CD14-positive monocyte (primary cell): ENCODE measurements at regions of chr2 and their contacts with region 1.

Region 1: GRCh38 chr2:20642055-20642971 is 8.6 kb downstream of the HS1BP3 start:
- DNase-seq: peak; percentile 53 to 65 (median 57)
- H3K4me3 ChIP-seq: no peak overlapping the region
- H3K4me3 Mint-ChIP-seq: no peak overlapping the region
- H3K27ac ChIP-seq: peak overlapping the region in 1 of 2 donors; percentile 27
- H3K27ac Mint-ChIP-seq: peak overlapping the region in 4 of 7 donors; percentile 61 to 81 (median 76)
- H3K4me1 ChIP-seq: no peaks in the 10 kb centered on the region
- H3K4me1 Mint-ChIP-seq: peaks cover 15% of the 10 kb centered on the region
- H3K27me3 ChIP-seq: no peaks in the 10 kb centered on the region
- H3K27me3 Mint-ChIP-seq: peaks cover 0 to 5% (median 0%) of the 10 kb centered on the region in 3 donors
- CTCF ChIP-seq: peak; percentile 89

Region 2: DNA sequence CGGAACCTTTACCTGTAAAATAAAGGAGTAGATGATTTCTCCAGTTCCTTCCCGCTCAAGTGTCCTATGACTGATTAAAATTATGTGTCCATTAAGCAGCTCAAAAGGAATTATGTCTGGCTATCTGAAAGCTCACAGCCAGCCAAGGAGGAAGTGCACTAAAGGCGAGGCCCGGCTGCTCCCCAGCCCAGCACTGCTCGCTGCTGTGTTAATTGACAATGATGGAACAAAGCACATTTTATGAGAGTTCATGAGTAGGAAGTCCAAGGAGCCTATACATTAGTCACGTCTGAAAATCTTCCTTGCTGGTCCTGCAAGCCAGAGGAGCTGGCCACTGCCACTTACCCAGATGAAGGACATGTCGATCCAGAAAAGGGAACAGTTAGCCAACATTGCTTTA is 754.8 kb before region 1 on chr2:
- intact Hi-C with region 1: loop called in 1 of 2 experiments (anchors 10 kb)
- DNase-seq: peak; percentile 21 to 35 (median 34)
- H3K4me3 ChIP-seq: no peak overlapping the region
- H3K4me3 Mint-ChIP-seq: peak overlapping the region in 1 of 2 donors; percentile 19
- H3K27ac ChIP-seq: peak overlapping the region in 1 of 2 donors; percentile 1
- H3K27ac Mint-ChIP-seq: peak overlapping the region in 5 of 7 donors; percentile 24 to 81 (median 69)
- H3K4me1 ChIP-seq: peaks cover 28 to 37% of the 10 kb centered on the region in 2 donors
- H3K4me1 Mint-ChIP-seq: peaks cover 36% of the 10 kb centered on the region
- H3K27me3 ChIP-seq: no peaks in the 10 kb centered on the region
- H3K27me3 Mint-ChIP-seq: peaks cover 0 to 7% (median 4%) of the 10 kb centered on the region in 3 donors
- CTCF ChIP-seq: no peak

Region 3: DNA sequence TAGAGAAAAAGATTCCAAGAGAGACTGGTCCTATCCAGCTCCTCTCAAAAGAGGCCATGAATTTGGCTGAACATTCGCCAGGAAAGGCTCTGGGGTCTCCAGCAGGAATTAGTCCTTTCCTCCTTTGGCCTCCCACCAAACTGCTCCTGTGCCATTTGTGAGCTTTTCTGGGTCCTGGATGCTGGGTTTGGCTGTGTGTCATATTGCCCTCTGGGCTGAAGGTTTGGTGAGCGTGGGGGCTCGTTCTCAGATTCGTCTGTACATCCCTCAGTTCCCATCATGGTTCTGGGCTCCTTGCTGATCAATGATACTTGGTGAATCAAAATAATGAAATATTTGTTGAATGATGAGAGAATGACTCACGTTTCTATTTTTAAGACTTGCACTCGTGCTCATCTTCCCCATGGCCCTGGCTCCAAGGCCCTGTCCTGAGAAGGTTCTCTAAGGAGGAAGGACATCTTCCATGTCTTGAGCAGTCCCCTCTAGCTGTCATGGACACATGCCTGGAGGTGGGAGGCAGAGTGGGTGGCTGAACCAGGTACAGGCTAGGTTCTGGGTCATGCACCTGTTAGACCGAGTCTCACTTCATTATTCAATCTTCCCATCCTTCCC is 243.3 kb before region 1 on chr2:
- intact Hi-C with region 1: loop called (anchors 5 kb)
- DNase-seq: no peak
- H3K4me3 ChIP-seq: no peak overlapping the region
- H3K4me3 Mint-ChIP-seq: no peak overlapping the region
- H3K27ac ChIP-seq: no peak overlapping the region
- H3K27ac Mint-ChIP-seq: no peak overlapping the region
- H3K4me1 ChIP-seq: no peaks in the 10 kb centered on the region
- H3K4me1 Mint-ChIP-seq: no peaks in the 10 kb centered on the region
- H3K27me3 ChIP-seq: no peaks in the 10 kb centered on the region
- H3K27me3 Mint-ChIP-seq: peaks cover 2 to 6% (median 4%) of the 10 kb centered on the region in 3 donors
- CTCF ChIP-seq: no peak

Region 4: GRCh38 chr2:20446917-20447436 is 195.3 kb before region 1 on chr2 and contains the start of gene RHOB:
- intact Hi-C with region 1: loop called in 1 of 2 experiments (anchors 5 kb)
- DNase-seq: peak; percentile 98 to 100 (median 98)
- H3K4me3 ChIP-seq: peak within 1 kb of the TSS; percentile 75 to 93 (median 91)
- H3K4me3 Mint-ChIP-seq: peak within 1 kb of the TSS; percentile 95 to 96
- H3K27ac ChIP-seq: peak within 1 kb of the TSS; percentile 63 to 81
- H3K27ac Mint-ChIP-seq: peak within 1 kb of the TSS; percentile 84 to 98 (median 95)
- H3K4me1 ChIP-seq: peaks cover 18 to 34% of the 10 kb centered on the region in 2 donors
- H3K4me1 Mint-ChIP-seq: peaks cover 33% of the 10 kb centered on the region
- H3K27me3 ChIP-seq: peaks cover 0 to 9% of the 10 kb centered on the region in 2 donors
- H3K27me3 Mint-ChIP-seq: peaks cover 15 to 36% (median 36%) of the 10 kb centered on the region in 3 donors
- CTCF ChIP-seq: no peak
- polyA plus RNA-seq, gene RHOB: 43.3 to 602 (median 66.3) TPM

Region 5: GRCh38 chr2:20474757-20475566 is 167.4 kb before region 1 on chr2:
- intact Hi-C with region 1: no loop called
- DNase-seq: no peak
- H3K4me3 ChIP-seq: no peak overlapping the region
- H3K4me3 Mint-ChIP-seq: no peak overlapping the region
- H3K27ac ChIP-seq: no peak overlapping the region
- H3K27ac Mint-ChIP-seq: no peak overlapping the region
- H3K4me1 ChIP-seq: no peaks in the 10 kb centered on the region
- H3K4me1 Mint-ChIP-seq: peaks cover 4% of the 10 kb centered on the region
- H3K27me3 ChIP-seq: no peaks in the 10 kb centered on the region
- H3K27me3 Mint-ChIP-seq: peaks cover 0 to 5% (median 3%) of the 10 kb centered on the region in 3 donors
- CTCF ChIP-seq: no peak

Region 6: GRCh38 chr2:20675701-20676352 is 33.5 kb after region 1 on chr2:
- intact Hi-C with region 1: no loop called
- DNase-seq: no peak
- H3K4me3 ChIP-seq: no peak overlapping the region
- H3K4me3 Mint-ChIP-seq: no peak overlapping the region
- H3K27ac ChIP-seq: no peak overlapping the region
- H3K27ac Mint-ChIP-seq: no peak overlapping the region
- H3K4me1 ChIP-seq: no peaks in the 10 kb centered on the region
- H3K4me1 Mint-ChIP-seq: peaks cover 10% of the 10 kb centered on the region
- H3K27me3 ChIP-seq: peaks cover 11 to 34% of the 10 kb centered on the region in 2 donors
- H3K27me3 Mint-ChIP-seq: peaks cover 41 to 46% (median 45%) of the 10 kb centered on the region in 3 donors
- CTCF ChIP-seq: no peak

Region 7: DNA sequence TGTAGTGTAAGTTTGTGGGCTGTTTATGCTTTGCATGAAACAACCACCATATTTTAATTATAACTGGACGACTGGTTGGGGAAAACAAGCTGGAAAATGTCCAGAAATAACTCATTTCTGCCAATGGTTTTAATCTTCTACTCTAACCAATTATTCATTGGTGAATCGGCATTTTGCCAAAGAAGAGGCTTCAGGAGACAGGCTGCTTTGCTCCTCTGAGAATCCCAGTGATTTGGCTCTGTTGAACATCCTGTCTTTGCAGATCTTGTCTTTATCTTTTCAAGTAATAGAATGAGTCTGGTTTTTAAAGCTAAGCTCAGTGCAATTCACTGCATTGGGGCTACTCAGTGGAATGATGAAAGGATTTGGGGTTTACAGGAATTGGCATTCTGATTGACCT is 291.9 kb after region 1 on chr2:
- intact Hi-C with region 1: no loop called
- DNase-seq: no peak
- H3K4me3 ChIP-seq: no peak overlapping the region
- H3K4me3 Mint-ChIP-seq: no peak overlapping the region
- H3K27ac ChIP-seq: no peak overlapping the region
- H3K27ac Mint-ChIP-seq: no peak overlapping the region
- H3K4me1 ChIP-seq: no peaks in the 10 kb centered on the region
- H3K4me1 Mint-ChIP-seq: no peaks in the 10 kb centered on the region
- H3K27me3 ChIP-seq: no peaks in the 10 kb centered on the region
- H3K27me3 Mint-ChIP-seq: peaks cover 1 to 5% (median 4%) of the 10 kb centered on the region in 3 donors
- CTCF ChIP-seq: no peak